Heart right ventricle (tissue), 16 donors: ENCODE measurements at regions of chr5 and their contacts with region 1.

Region 1: GRCh38 chr5:5492087-5492933 is 69.8 kb downstream of the ICE1 start:
- DNase-seq: peak in 1 of 2 donors; percentile 28
- ATAC-seq: peak in 4 of 8 donors; percentile 23 to 47 (median 43)
- H3K4me3 ChIP-seq: no peak overlapping the region
- H3K27ac ChIP-seq: no peak overlapping the region
- H3K4me1 ChIP-seq: peaks cover 0 to 26% (median 10%) of the 10 kb centered on the region in 9 donors
- H3K27me3 ChIP-seq: peaks cover 0 to 29% (median 0%) of the 10 kb centered on the region in 7 donors
- CTCF ChIP-seq: peak; percentile 50 to 79 (median 72)

Region 2: DNA sequence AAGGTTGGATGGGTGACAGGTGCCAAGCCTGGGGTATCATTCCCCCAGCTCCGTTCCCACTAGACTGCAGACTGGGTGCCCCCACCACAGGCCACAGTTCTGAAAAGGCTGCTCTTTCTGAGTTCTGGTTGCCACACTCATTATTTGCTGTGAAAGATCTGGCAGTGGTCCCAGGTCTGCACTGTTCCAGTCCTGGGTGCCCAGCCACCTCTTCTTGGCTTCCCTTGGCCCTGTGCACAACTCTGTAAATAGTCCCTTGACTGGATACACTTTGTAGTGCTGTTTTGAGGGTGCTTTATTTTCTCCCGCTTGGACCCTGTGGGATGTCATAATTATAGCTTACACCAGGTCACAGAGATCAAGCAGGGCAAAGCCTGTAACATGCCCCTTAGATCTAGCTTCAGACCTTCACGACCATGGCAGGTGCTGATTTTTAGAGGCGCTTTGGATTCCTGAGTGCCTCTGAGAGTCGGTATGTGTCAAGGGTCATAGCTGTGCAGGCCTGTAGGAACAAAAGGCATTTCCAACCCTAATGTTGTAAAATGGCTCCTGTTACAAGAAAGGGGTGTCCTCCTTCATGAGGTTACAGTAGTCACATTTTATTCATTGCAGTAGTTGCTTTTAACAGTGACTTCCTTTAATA is 275.1 kb after region 1 on chr5:
- intact Hi-C with region 1: loop called in 1 of 10 experiments (anchors 5 kb)
- DNase-seq: peak; percentile 36 to 51
- ATAC-seq: peak; percentile 76 to 98 (median 94)
- H3K4me3 ChIP-seq: no peak overlapping the region
- H3K27ac ChIP-seq: peak overlapping the region in 6 of 10 donors; percentile 19 to 68 (median 40)
- H3K4me1 ChIP-seq: peaks cover 0 to 12% (median 0%) of the 10 kb centered on the region in 9 donors
- H3K27me3 ChIP-seq: no peaks in the 10 kb centered on the region
- CTCF ChIP-seq: no peak

Region 3: GRCh38 chr5:5881294-5881693 is 389.0 kb after region 1 on chr5:
- intact Hi-C with region 1: loop called in 9 of 10 experiments (anchors 5 to 10 kb)
- DNase-seq: no peak
- ATAC-seq: peak in 2 of 8 donors; percentile 47 to 55
- H3K4me3 ChIP-seq: no peak overlapping the region
- H3K27ac ChIP-seq: no peak overlapping the region
- H3K4me1 ChIP-seq: no peaks in the 10 kb centered on the region
- H3K27me3 ChIP-seq: peaks cover 0 to 11% (median 0%) of the 10 kb centered on the region in 7 donors
- CTCF ChIP-seq: peak in 6 of 9 donors; percentile 10 to 37 (median 18)

Region 4: DNA sequence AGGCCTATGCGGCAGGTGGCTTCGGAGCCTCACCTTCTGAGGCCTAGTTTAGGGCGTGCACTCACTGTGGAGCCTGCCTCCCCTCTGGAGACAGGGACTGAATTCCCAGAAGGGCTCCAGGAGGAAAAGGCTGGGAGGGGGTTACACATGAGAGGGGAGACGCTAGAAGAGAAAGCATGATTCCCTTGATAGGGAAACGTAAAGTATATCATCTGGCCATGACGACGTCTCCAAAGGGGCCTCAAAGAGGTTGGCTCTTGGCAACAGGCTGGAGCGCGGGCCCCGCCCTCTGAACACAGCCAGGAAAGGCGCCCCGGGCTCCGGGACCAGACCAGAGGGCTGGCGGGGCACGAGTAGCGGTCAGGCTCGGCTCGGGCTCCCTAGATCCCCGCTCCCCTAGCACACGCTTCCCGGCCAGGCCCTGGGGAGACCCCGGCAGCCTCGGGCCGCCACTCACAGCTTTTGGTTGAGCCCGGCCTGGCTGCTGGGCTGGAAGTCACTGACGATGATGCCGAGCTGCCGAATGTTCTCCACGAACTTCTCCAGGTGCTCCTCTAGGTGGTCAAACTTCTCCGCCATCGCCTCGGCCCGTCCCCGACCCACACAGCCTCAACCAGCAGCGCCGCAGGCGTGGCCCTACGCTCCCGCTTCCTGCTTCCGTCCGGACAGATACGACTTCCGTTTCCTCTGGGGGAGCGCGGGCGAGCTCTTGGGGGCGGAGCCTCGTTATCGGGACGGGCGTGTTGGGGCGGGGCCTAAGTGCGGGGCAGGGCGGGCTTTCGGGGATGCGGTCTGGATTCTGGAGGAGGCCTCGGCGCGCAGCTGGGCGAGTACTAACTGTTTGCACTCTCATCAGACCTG is 885.8 kb after region 1 on chr5 and contains the start of gene MED10:
- intact Hi-C with region 1: loop called in 2 of 10 experiments (anchors 10 kb)
- DNase-seq: peak; percentile 96 to 97
- ATAC-seq: peak; percentile 99 to 100 (median 100)
- H3K4me3 ChIP-seq: peak within 1 kb of the TSS; percentile 74 to 99 (median 92)
- H3K27ac ChIP-seq: peak within 1 kb of the TSS; percentile 44 to 96 (median 90)
- H3K4me1 ChIP-seq: peaks cover 5 to 33% (median 20%) of the 10 kb centered on the region in 9 donors
- H3K27me3 ChIP-seq: peaks cover 0 to 1% (median 0%) of the 10 kb centered on the region in 7 donors
- CTCF ChIP-seq: no peak
- total RNA-seq, gene MED10: 15.3 to 29.5 (median 22.4) TPM

Region 5: DNA sequence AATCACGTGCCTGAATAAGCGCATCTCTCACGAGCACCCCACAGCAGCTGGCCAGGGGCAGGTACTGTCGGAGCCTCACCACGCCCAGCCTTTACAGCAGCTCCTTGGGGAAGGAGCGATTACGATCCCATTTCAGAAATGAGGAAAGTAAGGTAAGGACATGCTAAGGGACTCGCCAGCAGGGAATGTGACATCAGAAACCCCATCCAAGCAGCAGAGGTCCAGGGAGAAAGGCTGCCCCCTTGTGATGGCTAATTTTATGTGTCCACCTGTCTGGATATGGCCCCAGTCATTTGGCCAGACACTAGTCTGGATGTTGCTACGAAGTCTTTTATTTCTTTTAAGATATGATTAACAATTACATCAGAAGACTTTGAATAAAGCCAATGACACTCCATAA is 1033.6 kb after region 1 on chr5:
- intact Hi-C with region 1: loop called in 1 of 10 experiments (anchors 10 kb)
- DNase-seq: peak in 1 of 2 donors; percentile 46
- ATAC-seq: peak; percentile 46 to 89 (median 70)
- H3K4me3 ChIP-seq: no peak overlapping the region
- H3K27ac ChIP-seq: no peak overlapping the region
- H3K4me1 ChIP-seq: no peaks in the 10 kb centered on the region
- H3K27me3 ChIP-seq: peaks cover 0 to 11% (median 0%) of the 10 kb centered on the region in 7 donors
- CTCF ChIP-seq: peak; percentile 12 to 55 (median 39)

Region 6: DNA sequence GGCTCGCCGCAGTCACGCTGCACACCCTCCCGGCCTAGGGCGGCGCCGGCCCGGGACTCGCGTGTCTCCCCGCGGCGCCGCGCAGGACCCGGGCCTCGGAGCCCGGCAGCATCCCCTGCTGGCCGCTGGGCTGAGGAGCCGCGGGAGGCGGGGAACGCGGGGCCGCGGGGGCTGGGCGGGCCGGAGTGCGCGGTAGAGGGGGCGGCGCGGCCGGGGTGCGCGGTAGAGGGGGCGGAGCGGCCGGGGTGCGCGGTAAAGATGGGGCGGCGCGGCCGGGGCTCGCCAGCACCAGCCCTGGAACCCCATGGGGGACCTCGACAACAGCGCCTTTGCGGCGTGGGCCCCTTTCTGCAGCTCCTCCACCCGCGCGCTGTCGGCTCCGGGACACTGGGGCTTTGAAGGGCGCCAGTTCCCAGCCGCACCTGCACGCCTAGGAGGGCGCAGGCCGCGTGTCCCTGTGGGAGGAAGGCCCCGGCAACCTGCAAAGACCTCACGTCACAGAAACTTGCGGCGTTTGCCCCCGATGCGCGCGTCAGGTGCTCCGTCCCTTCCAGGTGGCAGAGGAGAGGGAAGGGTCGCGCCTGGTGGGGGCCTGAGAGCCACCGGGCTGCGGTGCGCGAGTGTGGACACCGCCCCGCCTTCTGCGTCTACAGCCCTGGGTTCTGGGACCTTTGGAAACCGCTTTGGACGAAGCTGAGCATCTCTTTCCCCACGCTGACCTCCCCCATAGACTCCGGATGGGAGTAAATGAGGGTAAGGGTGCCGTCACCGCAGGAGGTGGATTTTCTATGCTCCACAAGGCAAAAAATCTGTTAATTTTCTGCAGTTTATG is 1091.0 kb after region 1 on chr5:
- intact Hi-C with region 1: loop called in 6 of 10 experiments (anchors 5 to 10 kb)
- DNase-seq: peak in 1 of 2 donors; percentile 51
- ATAC-seq: peak; percentile 76 to 95 (median 88)
- H3K4me3 ChIP-seq: peak overlapping the region; percentile 19 to 62 (median 50)
- H3K27ac ChIP-seq: no peak overlapping the region
- H3K4me1 ChIP-seq: peaks cover 0 to 15% (median 4%) of the 10 kb centered on the region in 9 donors
- H3K27me3 ChIP-seq: peaks cover 0 to 46% (median 21%) of the 10 kb centered on the region in 7 donors
- CTCF ChIP-seq: peak; percentile 19 to 63 (median 34)